H1 (cell line): ENCODE measurements at regions of chr4 and their contacts with region 1.

Region 1: DNA sequence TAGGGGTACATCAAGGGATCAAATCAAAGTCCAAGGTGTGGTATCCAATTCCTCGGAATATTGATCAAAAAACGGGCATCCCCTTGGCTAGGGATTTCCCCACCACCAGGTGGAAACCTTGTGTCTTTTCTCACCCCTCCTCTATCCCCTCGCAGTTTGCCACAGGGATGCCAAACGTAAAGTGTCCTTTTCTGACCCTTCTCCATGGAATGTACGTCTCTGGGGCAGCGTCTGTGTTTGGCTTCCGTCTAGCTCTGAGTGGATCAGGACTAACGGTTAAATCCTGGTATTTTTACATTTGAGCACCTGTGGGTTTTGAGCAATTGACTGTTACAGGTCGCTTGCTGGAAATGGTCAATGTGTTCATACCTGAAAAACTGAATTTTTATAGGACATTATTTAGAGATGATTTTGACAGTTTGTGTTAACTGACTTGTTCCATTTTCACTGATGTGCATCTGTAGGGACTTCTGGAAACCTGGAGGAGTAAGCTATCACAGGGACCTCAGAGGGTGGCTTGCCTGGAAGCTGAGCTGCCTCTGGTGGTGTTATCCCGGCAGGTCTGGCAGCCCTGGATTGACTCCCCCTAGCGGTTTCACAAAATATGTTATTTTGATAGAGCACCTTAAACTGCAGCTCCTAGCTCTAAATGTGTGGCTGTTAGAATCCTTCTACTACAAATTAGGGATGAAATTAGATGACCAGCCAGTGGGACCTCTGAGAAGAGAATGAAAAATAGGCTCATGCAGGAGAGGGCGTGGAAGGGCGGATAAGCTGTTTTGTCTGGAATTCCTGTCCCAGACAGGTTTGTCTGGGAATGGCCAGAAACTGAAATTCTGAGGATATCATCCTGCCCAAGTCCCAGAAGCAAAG is 8.8 kb upstream of the MGST2 start:
- DNase-seq: peak in 1 of 2 experiments; percentile 58
- H3K4me3 ChIP-seq: peak overlapping the region in 2 of 4 experiments; percentile 3 to 45; a peak in 3 of 8 replicates
- H3K27ac ChIP-seq: no peak overlapping the region
- H3K4me1 ChIP-seq: peaks cover 4 to 11% (median 6%) of the 10 kb centered on the region in 4 experiments; a peak in 6 of 7 replicates
- H3K27me3 ChIP-seq: no peaks in the 10 kb centered on the region; a peak in 1 of 7 replicates
- CTCF ChIP-seq: peak; percentile 85 to 99 (median 89)
- EP300 ChIP-seq: no peak
- POLR2A ChIP-seq: no peak
- RAD21 ChIP-seq: peak; percentile 51 to 62

Region 2: GRCh38 chr4:139682741-139683151 is 25.9 kb after region 1 on chr4:
- CTCF ChIA-PET with region 1: interaction called, 25 read pairs
- POLR2A ChIA-PET with region 1: no interaction called
- DNase-seq: no peak
- H3K4me3 ChIP-seq: no peak overlapping the region
- H3K27ac ChIP-seq: no peak overlapping the region
- H3K4me1 ChIP-seq: no peaks in the 10 kb centered on the region
- H3K27me3 ChIP-seq: no peaks in the 10 kb centered on the region
- CTCF ChIP-seq: no peak
- EP300 ChIP-seq: no peak
- POLR2A ChIP-seq: no peak
- RAD21 ChIP-seq: no peak

Region 3: GRCh38 chr4:139696491-139696890 is 39.6 kb after region 1 on chr4:
- CTCF ChIA-PET with region 1: interaction called, 23 read pairs
- POLR2A ChIA-PET with region 1: no interaction called
- DNase-seq: no peak
- H3K4me3 ChIP-seq: no peak overlapping the region
- H3K27ac ChIP-seq: no peak overlapping the region
- H3K4me1 ChIP-seq: no peaks in the 10 kb centered on the region
- H3K27me3 ChIP-seq: no peaks in the 10 kb centered on the region
- CTCF ChIP-seq: no peak
- EP300 ChIP-seq: no peak
- POLR2A ChIP-seq: no peak
- RAD21 ChIP-seq: no peak

Region 4: DNA sequence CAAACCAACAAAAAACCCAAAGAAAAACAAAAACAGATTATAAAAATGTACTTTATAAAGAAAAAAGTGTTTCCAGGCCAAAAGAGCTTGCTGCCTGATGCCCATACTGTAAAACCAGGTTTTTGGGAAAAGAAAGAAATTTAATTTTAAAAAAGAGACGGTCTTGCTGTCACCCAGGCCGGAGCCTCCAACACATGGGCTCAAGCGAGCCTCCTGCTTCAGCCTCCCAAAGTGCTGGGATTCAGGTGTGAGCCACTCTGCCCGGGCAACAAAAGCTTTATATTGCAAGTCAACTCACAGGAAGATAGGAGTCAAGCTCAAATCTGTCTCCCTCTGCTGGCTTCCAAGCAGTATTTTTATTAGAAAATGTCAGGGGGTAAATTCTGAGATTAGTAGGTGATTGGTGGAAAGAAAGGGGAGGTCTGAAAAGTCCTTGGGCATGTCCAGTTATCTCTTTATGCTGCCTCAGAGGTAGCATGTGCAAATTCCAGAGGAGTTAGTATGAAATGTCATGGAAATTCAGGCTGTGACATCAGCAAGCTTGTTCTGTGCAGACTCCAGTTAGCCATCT is 48.1 kb after region 1 on chr4:
- CTCF ChIA-PET with region 1: interaction called, 17 read pairs
- POLR2A ChIA-PET with region 1: no interaction called
- DNase-seq: no peak
- H3K4me3 ChIP-seq: no peak overlapping the region
- H3K27ac ChIP-seq: no peak overlapping the region
- H3K4me1 ChIP-seq: no peaks in the 10 kb centered on the region
- H3K27me3 ChIP-seq: peaks cover 0 to under 1% (median 0%) of the 10 kb centered on the region in 4 experiments; a peak in 1 of 7 replicates
- CTCF ChIP-seq: peak in 2 of 3 experiments; percentile 28 to 37; a peak in 2 of 4 replicates
- EP300 ChIP-seq: no peak
- POLR2A ChIP-seq: no peak
- RAD21 ChIP-seq: peak; percentile 19 to 24; a peak in 3 of 4 replicates

Region 5: DNA sequence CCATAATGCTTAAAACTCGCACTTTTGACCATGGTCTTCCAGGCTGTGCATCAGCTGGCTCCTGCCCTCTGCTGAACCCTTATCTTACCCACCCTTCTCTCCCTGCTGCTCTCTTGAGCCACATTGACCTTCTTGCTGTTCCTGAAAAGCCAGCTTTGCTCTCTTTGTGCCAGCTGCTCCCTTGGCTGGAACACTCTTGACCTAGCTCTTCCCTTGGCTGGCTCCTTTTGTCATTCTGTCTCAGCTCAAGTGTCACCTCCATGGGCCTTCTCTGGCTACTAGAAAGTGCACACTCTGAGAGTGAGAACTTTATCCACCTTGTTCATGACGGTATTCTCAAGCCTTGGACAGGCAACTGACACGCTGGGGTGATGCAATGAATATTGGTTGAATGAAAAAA is 120.9 kb after region 1 on chr4:
- CTCF ChIA-PET with region 1: no interaction called
- POLR2A ChIA-PET with region 1: no interaction called
- DNase-seq: no peak
- H3K4me3 ChIP-seq: no peak overlapping the region
- H3K27ac ChIP-seq: no peak overlapping the region
- H3K4me1 ChIP-seq: peaks cover 0 to 6% (median 3%) of the 10 kb centered on the region in 4 experiments; a peak in 3 of 7 replicates
- H3K27me3 ChIP-seq: no peaks in the 10 kb centered on the region
- CTCF ChIP-seq: no peak
- EP300 ChIP-seq: no peak
- POLR2A ChIP-seq: no peak
- RAD21 ChIP-seq: no peak